Activated naive CD4-positive, alpha-beta T cell treated with anti-CD3 and anti-CD28 coated beads for 36 hours (primary cell): ENCODE measurements at regions of chr6 and their contacts with region 1.

Region 1: GRCh38 chr6:14210663-14211561 is 93.3 kb downstream of the CD83 start:
- DNase-seq: peak; percentile 88
- H3K4me3 Mint-ChIP-seq: peak overlapping the region; percentile 79
- H3K27ac Mint-ChIP-seq: peak overlapping the region; percentile 71
- H3K4me1 Mint-ChIP-seq: peaks cover 12% of the 10 kb centered on the region
- H3K27me3 Mint-ChIP-seq: no peaks in the 10 kb centered on the region

Region 2: GRCh38 chr6:13927203-13927602 is 283.7 kb before region 1 on chr6:
- CTCF ChIA-PET with region 1: no interaction called
- intact Hi-C with region 1: no loop called
- DNase-seq: no peak
- H3K4me3 Mint-ChIP-seq: no peak overlapping the region
- H3K27ac Mint-ChIP-seq: no peak overlapping the region
- H3K4me1 Mint-ChIP-seq: peaks cover 14% of the 10 kb centered on the region
- H3K27me3 Mint-ChIP-seq: peaks cover 71% of the 10 kb centered on the region

Region 3: GRCh38 chr6:14276667-14277404 is 65.9 kb after region 1 on chr6:
- CTCF ChIA-PET with region 1: interaction called, 4 read pairs
- intact Hi-C with region 1: loop called (anchors 2 kb)
- DNase-seq: peak; percentile 63
- H3K4me3 Mint-ChIP-seq: peak overlapping the region; percentile 40
- H3K27ac Mint-ChIP-seq: peak overlapping the region; percentile 85
- H3K4me1 Mint-ChIP-seq: peaks cover 37% of the 10 kb centered on the region
- H3K27me3 Mint-ChIP-seq: no peaks in the 10 kb centered on the region

Region 4: DNA sequence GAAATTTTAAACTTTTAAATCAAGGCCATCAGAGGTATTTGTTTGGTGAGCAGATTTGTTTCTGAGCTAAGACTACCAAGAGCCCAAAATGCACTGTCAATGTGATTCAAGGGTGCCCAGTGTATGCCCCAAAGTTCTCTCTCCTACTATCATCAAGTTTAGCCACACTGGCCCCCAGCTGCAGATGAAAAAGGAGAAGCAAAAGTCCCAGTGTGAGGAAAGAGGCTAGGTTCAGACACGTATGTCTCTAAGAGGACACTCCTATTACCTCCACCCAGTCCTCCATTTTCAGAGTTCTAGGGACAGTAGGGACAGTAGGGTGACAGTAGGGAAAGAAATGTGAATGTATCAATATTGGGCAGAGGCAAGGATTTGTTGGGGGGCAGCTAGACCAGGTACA is 137.5 kb after region 1 on chr6:
- CTCF ChIA-PET with region 1: no interaction called
- intact Hi-C with region 1: no loop called
- DNase-seq: no peak
- H3K4me3 Mint-ChIP-seq: no peak overlapping the region
- H3K27ac Mint-ChIP-seq: no peak overlapping the region
- H3K4me1 Mint-ChIP-seq: peaks cover 6% of the 10 kb centered on the region
- H3K27me3 Mint-ChIP-seq: no peaks in the 10 kb centered on the region

Region 5: DNA sequence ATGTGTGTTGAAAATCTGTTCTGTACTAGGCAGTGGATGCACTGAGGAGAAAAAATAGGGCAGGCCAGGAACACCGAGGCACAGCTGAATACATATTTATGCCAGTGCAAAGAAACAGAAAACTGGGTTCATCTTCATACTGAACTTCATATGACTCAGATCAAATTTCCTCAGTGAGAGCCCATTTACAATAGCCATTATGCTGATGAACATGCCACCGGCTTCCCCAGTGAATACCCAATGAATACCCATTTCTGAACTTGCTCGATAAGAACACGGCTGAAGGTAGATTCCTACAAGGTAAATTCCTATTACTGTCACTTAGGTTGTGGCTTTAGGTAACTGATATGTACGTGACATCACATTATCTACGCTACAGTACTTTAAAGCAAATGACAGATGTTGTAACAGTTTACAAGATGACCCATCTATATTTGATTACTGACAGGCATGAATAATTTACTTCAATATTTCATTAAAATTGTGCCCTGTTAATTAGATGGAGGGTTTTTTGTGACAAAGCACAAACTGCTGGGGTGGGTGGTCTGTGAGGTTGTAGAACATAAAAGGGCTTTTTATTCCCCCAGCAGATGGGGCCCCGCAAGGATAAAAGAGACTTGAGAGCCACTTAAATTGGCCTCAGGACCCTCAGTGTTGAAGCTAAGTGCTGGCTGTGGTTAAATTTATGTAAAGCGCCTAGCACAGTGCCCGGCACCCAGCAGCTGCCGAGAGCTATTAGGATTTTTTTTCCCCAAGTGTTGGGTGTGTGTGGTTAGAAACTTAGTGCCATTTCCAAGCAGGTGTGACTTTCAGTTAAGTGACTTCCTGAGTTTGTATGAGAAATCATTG is 171.1 kb after region 1 on chr6:
- CTCF ChIA-PET with region 1: no interaction called
- intact Hi-C with region 1: loop called (anchors 10 kb)
- DNase-seq: peak; percentile 54
- H3K4me3 Mint-ChIP-seq: no peak overlapping the region
- H3K27ac Mint-ChIP-seq: peak overlapping the region; percentile 41
- H3K4me1 Mint-ChIP-seq: peaks cover 36% of the 10 kb centered on the region
- H3K27me3 Mint-ChIP-seq: peaks cover 2% of the 10 kb centered on the region

Region 6: DNA sequence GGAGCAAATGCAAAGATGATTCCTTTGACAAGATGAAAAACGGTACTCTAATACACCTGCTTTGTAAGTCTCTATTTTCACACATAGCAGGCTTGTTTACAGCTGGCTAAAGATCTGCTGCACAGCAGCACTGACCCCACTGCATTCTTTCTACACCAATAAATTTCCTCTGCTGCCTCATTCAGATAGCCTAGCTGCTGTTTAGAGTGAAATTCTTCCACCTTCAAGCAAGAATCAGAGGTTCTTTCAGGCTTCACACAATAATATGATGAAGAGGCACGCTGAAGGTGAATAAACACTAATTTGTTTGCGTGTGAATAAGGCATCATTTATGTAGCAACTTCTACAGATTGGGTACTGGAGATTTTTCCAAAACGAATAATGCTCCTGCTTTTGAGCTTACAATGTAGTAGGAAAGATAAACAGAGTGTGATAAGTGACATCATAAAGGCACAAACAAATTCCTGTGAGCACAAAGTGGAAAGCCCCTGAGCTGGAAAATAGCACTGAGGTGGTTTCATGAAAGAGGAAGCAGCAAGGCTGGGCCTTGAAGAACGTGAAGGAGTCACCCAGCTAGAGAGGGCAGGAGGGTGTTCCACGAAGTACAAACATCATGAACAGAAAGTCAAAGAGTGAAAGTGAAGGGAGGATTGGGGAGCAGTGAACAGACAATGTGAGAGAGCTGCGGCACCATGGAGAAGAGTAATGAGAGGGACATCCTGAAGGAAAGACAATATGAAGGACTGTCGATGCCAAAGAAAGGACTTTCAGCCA is 450.1 kb after region 1 on chr6:
- CTCF ChIA-PET with region 1: interaction called, 4 read pairs
- intact Hi-C with region 1: loop called (anchors 5 kb)
- DNase-seq: peak; percentile 71
- H3K4me3 Mint-ChIP-seq: no peak overlapping the region
- H3K27ac Mint-ChIP-seq: no peak overlapping the region
- H3K4me1 Mint-ChIP-seq: peaks cover 44% of the 10 kb centered on the region
- H3K27me3 Mint-ChIP-seq: no peaks in the 10 kb centered on the region

Region 7: GRCh38 chr6:15491255-15491985 is 1280.5 kb after region 1 on chr6:
- CTCF ChIA-PET with region 1: no interaction called
- intact Hi-C with region 1: loop called (anchors 5 kb)
- DNase-seq: peak; percentile 86
- H3K4me3 Mint-ChIP-seq: no peak overlapping the region
- H3K27ac Mint-ChIP-seq: peak overlapping the region; percentile 51
- H3K4me1 Mint-ChIP-seq: peaks cover 36% of the 10 kb centered on the region
- H3K27me3 Mint-ChIP-seq: no peaks in the 10 kb centered on the region